ENCODE measurements at regions of chr9 and their contacts with region 1.

Region 1: GRCh38 chr9:101449140-101449721 is 13.7 kb upstream of the ALDOB start:
- DNase-seq: peak; percentile 79
- ATAC-seq: peak; percentile 96 to 99

Region 2: DNA sequence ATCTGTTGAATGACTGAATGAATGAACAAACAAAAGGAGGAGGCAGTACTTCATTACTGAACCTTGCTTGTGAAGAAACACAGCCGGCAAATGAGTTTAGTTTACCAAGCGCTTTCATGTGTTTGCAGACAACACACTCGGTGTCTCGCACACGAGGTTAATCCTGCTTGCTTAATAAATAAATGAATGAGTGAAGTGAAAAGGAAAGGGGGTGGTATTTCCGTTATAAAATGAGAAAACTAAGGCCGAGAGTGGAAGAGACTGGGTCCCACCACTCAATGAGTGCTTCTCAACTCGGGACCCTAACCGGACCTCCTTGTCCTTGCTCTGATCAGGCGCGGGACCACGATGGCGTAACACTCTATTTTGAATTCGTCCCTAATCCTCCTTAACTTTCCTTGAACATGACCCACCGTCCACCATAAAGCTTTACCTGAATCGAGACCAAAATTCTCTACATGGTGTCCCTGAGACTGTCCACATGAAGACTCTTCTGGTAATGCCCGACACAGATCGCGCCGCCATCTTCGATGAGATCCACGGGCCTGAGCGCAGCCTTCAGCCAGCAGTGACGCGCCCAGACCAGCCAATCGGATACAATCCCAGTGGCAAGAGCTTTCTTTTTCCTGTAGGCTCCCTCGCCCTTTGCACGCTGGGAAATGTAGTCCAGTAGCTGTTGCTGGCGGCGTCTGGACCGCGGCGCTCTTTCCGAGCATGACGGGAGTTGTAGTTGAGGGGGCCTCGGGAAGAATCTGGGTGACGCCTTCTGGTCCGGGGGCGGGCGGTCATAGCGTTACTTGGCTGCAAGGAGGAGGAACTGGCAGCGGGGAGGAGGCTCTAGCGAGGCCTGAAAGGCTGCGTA is 50.9 kb before region 1 on chr9 and contains the starts of genes MRPL50 and ZNF189:
- intact Hi-C with region 1: loop called in 1 of 2 experiments (anchors 5 kb)
- DNase-seq: peak; percentile 99
- ATAC-seq: peak; percentile 98 to 99
- total RNA-seq, gene MRPL50: 15.0 to 19.9 TPM
- total RNA-seq, gene ZNF189: 18.9 to 36.7 TPM

Region 3: GRCh38 chr9:101508211-101508610 is 59.0 kb after region 1 on chr9:
- intact Hi-C with region 1: no loop called
- DNase-seq: no peak
- ATAC-seq: peak; percentile 23 to 58

Region 4: GRCh38 chr9:101586651-101587050 is 137.4 kb after region 1 on chr9:
- intact Hi-C with region 1: no loop called
- DNase-seq: no peak
- ATAC-seq: no peak

Measured in left cardiac atrium (tissue), 4 donors.